CD8-positive, alpha-beta T cell (primary cell): ENCODE measurements at regions of chr10 and their contacts with region 1.

Region 1: DNA sequence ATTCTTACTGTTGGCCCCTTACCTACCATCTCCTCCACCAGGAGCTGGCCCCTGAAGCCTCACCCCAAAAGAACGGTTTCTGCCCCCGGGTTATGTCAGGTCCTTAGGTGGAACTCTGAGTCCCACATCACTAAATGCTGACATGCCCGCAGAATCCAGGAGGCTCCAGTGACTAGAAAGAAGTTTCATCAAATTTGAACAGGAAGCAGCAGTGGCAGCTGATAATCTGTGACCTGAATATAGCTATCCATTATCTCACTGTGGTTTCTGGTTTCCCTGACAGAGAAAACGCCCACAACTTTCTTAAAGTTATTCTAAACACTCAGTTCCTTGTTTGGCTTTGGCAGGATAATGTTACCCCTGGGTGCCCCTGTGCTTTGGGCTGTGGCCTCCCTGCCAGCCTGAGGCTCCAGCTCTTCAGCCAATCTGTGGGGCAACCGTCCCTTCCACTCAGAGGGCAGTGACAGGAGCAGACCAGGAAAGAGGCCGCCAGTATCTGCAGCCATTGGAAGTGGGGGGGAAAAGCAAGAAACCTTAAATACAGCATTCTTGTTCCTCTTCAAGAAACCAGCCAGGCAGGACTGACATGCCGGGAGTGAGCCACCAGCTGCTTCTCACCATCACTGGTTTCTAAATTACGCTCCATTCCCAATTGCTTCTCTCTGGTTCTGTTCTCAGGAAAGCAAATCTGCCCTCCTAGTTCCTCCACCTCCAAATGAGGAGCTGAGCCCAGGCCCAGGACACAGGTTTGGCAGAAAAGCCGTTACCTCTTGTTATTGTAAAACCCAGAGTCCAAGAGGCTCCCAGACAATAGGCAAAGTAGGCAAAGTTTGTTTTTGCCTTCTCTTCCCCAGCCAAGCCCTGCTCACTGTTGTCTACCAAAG is 41.2 kb upstream of the VCL start:
- DNase-seq: peak in 6 of 9 experiments; percentile 12 to 77 (median 36)
- ATAC-seq: peak; percentile 80
- H3K4me3 ChIP-seq: peak overlapping the region; percentile 3 to 26
- H3K4me3 Mint-ChIP-seq: peak overlapping the region; percentile 64
- H3K27ac ChIP-seq: peak overlapping the region in 1 of 2 experiments; percentile 72
- H3K27ac Mint-ChIP-seq: peak overlapping the region; percentile 86
- H3K4me1 ChIP-seq: peaks cover 27% of the 10 kb centered on the region
- H3K4me1 Mint-ChIP-seq: peaks cover 43% of the 10 kb centered on the region
- H3K27me3 ChIP-seq: no peaks in the 10 kb centered on the region
- H3K27me3 Mint-ChIP-seq: no peaks in the 10 kb centered on the region
- CTCF ChIP-seq: no peak

Region 2: DNA sequence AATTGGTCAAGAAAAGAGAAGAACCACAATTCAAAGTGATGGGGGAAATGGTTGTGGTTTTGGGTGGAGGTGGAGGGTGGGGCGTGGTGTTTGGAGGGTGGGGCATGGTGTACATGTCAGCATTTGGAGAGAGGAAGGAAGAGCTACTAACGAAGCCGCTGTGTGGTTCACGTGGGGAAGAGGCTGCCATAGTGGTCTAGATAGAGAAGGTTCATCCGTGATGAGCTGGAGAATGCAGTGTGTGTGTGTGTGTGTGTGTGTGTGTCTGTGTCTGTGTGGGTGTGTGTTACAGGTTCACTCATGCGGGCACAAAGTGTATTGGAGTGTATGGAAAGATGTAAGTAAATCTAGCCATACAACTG is 35.1 kb after region 1 on chr10:
- CTCF ChIA-PET with region 1: interaction called, 16 read pairs
- POLR2A ChIA-PET with region 1: interaction called, 3 read pairs
- intact Hi-C with region 1: loop called in 1 of 2 experiments (anchors 5 kb)
- DNase-seq: peak; percentile 64 to 92 (median 77)
- ATAC-seq: peak; percentile 100
- H3K4me3 ChIP-seq: no peak overlapping the region
- H3K4me3 Mint-ChIP-seq: no peak overlapping the region
- H3K27ac ChIP-seq: peak overlapping the region in 1 of 2 experiments; percentile 52
- H3K27ac Mint-ChIP-seq: peak overlapping the region; percentile 43
- H3K4me1 ChIP-seq: peaks cover 18% of the 10 kb centered on the region
- H3K4me1 Mint-ChIP-seq: peaks cover 28% of the 10 kb centered on the region
- H3K27me3 ChIP-seq: no peaks in the 10 kb centered on the region
- H3K27me3 Mint-ChIP-seq: no peaks in the 10 kb centered on the region
- CTCF ChIP-seq: no peak

Region 3: GRCh38 chr10:73997787-73998622 is 41.3 kb after region 1 on chr10 and contains the start of gene VCL:
- CTCF ChIA-PET with region 1: interaction called, 16 read pairs
- POLR2A ChIA-PET with region 1: no interaction called
- intact Hi-C with region 1: loop called (anchors 1 to 5 kb)
- DNase-seq: peak; percentile 91 to 97 (median 95)
- ATAC-seq: peak; percentile 96
- H3K4me3 ChIP-seq: peak within 1 kb of the TSS; percentile 82
- H3K4me3 Mint-ChIP-seq: peak within 1 kb of the TSS; percentile 100
- H3K27ac ChIP-seq: peak within 1 kb of the TSS; percentile 63
- H3K27ac Mint-ChIP-seq: peak within 1 kb of the TSS; percentile 96
- H3K4me1 ChIP-seq: peaks cover 32% of the 10 kb centered on the region
- H3K4me1 Mint-ChIP-seq: peaks cover 45% of the 10 kb centered on the region
- H3K27me3 ChIP-seq: no peaks in the 10 kb centered on the region
- H3K27me3 Mint-ChIP-seq: no peaks in the 10 kb centered on the region
- CTCF ChIP-seq: no peak
- total RNA-seq, gene VCL: 6.6 to 9.4 TPM

Region 4: DNA sequence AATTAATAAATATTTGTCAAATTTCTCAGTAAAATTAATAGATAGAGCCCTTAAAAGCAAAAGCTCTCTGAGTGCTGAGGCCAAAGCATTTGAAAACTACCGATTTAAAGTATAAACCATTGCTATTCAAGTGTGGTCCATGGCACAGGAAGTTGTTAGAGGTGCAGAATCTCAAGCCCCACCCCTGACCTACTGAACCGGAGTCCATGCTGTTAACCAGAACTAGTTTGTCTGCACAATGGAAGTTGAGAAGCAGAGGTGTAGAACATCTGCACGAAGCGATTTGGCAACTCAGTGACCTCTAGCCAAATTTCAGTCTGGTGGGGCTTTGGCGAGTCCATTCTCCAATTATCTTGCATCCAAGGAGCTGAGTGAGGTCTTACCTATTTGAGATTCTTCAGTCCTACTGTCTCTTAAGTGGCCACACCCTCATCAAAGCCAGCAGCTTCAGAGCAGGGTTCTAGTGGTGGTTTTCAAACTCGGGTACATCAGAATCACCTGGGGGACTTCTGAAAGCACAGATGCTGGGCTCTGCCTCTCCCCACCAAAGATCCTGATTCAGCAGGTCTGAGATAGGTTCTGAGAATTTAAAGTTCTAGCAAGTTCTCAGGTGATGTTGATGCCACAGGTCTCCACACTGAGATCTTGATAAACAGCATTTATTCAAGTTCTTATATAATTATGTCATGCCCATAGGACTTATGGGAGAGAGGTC is 1058.0 kb after region 1 on chr10:
- CTCF ChIA-PET with region 1: no interaction called
- POLR2A ChIA-PET with region 1: no interaction called
- intact Hi-C with region 1: no loop called
- DNase-seq: peak; percentile 9 to 76 (median 39)
- ATAC-seq: peak; percentile 84
- H3K4me3 ChIP-seq: no peak overlapping the region
- H3K4me3 Mint-ChIP-seq: peak overlapping the region; percentile 37
- H3K27ac ChIP-seq: peak overlapping the region in 1 of 2 experiments; percentile 68
- H3K27ac Mint-ChIP-seq: peak overlapping the region; percentile 76
- H3K4me1 ChIP-seq: peaks cover 28% of the 10 kb centered on the region
- H3K4me1 Mint-ChIP-seq: peaks cover 46% of the 10 kb centered on the region
- H3K27me3 ChIP-seq: no peaks in the 10 kb centered on the region
- H3K27me3 Mint-ChIP-seq: no peaks in the 10 kb centered on the region
- CTCF ChIP-seq: no peak